Activated naive CD4-positive, alpha-beta T cell treated with anti-CD3 and anti-CD28 coated beads for 36 hours (primary cell): ENCODE measurements at regions of chr19 and their contacts with region 1.

Region 1: DNA sequence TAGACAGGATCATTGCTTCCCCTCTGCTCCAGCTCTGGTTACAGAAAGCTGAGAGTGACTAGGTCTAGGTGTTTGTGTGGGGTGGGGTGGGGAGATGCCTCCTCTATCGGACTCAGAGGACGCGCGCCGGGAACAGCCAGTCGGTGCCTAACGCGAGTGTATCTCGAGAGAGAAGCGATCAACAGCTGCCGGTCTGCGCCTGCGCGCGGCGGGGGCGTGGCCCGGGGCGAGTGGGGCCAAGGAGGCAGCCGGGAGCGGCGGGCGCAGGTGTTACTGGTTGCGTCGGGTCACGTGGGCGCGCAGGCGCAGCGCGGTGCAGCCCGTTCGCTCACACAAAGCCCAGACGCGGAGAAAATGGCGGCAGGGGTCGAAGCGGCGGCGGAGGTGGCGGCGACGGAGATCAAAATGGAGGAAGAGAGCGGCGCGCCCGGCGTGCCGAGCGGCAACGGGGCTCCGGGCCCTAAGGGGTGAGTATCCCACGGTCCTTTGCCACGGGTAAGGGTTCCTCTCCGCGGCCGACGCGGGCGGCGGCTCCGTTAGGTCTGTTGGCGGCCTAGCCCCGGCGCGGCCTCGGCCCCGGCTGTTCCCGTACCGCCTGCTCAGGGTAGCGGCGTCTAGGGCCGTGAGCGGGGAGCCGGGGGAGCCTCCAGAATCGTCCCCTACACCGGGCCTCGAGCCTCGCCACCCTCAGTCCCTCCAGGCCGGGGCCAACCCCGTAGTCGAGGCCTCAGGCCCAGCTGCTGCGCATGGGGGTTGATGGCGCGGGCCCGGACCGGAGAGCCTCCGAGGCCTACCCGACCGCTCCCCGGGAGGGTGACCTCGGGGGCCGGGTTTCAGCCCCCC is at the start of gene HNRNPM:
- DNase-seq: peak; percentile 100
- H3K4me3 Mint-ChIP-seq: peak within 1 kb of the TSS; percentile 95
- H3K27ac Mint-ChIP-seq: peak within 1 kb of the TSS; percentile 94
- H3K4me1 Mint-ChIP-seq: peaks cover 38% of the 10 kb centered on the region
- H3K27me3 Mint-ChIP-seq: no peaks in the 10 kb centered on the region
- total RNA-seq, gene HNRNPM: 151 to 169 TPM

Region 2: GRCh38 chr19:8005534-8006256 is 439.2 kb before region 1 on chr19 and contains the start of gene ELAVL1:
- CTCF ChIA-PET with region 1: no interaction called
- intact Hi-C with region 1: loop called (anchors 10 kb)
- DNase-seq: peak; percentile 89
- H3K4me3 Mint-ChIP-seq: peak within 1 kb of the TSS; percentile 94
- H3K27ac Mint-ChIP-seq: peak within 1 kb of the TSS; percentile 78
- H3K4me1 Mint-ChIP-seq: peaks cover 35% of the 10 kb centered on the region
- H3K27me3 Mint-ChIP-seq: no peaks in the 10 kb centered on the region
- total RNA-seq, gene ELAVL1: 135 to 140 TPM

Region 3: DNA sequence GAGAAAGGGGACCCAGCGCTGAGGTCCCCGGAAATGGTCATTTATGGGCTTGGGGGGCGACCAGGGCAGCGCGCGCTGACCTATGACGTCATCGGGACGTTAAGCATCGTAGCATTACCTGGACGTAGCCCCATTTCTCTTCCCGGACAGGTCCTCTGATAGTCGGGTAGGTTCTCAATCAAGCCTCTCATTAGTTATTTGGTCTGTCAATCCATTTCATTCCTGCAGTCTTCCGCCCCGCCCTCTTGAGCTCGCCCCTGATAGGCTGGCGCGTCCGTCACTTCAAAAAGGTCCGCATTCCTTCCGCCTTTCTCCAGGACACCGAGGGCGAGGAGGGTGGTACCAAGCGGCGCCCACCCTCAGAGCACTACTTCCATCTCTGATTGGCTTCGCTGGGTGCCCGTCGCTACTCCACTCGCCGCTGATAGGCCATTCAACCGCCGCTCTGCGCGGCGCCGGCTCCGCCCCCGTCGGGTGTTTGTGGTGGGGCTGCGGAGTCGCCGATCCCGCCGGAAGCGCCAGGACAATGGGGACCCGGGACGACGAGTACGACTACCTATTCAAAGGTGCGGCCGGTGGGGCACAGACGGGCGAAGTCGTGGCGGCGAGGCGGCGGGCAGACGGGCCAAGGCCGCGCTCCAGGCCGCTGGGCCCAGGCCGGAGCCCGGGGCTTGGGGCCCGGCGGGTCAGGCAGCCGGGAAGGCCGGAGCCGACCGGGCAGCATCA is 54.8 kb before region 1 on chr19 and contains the start of gene RAB11B:
- CTCF ChIA-PET with region 1: no interaction called
- intact Hi-C with region 1: loop called (anchors 1 kb)
- DNase-seq: peak; percentile 100
- H3K4me3 Mint-ChIP-seq: peak within 1 kb of the TSS; percentile 93
- H3K27ac Mint-ChIP-seq: peak within 1 kb of the TSS; percentile 96
- H3K4me1 Mint-ChIP-seq: peaks cover 25% of the 10 kb centered on the region
- H3K27me3 Mint-ChIP-seq: no peaks in the 10 kb centered on the region
- total RNA-seq, gene RAB11B: 61.9 to 69.6 TPM

Region 4: GRCh38 chr19:8412783-8413628 is 31.9 kb before region 1 on chr19 and contains the start of gene MARCHF2:
- CTCF ChIA-PET with region 1: interaction called, 4 read pairs
- intact Hi-C with region 1: loop called (anchors 1 kb)
- DNase-seq: peak; percentile 95
- H3K4me3 Mint-ChIP-seq: peak within 1 kb of the TSS; percentile 56
- H3K27ac Mint-ChIP-seq: no peak within 1 kb of the TSS
- H3K4me1 Mint-ChIP-seq: peaks cover 5% of the 10 kb centered on the region
- H3K27me3 Mint-ChIP-seq: no peaks in the 10 kb centered on the region
- total RNA-seq, gene MARCHF2: 9.2 to 10.3 TPM

Region 5: DNA sequence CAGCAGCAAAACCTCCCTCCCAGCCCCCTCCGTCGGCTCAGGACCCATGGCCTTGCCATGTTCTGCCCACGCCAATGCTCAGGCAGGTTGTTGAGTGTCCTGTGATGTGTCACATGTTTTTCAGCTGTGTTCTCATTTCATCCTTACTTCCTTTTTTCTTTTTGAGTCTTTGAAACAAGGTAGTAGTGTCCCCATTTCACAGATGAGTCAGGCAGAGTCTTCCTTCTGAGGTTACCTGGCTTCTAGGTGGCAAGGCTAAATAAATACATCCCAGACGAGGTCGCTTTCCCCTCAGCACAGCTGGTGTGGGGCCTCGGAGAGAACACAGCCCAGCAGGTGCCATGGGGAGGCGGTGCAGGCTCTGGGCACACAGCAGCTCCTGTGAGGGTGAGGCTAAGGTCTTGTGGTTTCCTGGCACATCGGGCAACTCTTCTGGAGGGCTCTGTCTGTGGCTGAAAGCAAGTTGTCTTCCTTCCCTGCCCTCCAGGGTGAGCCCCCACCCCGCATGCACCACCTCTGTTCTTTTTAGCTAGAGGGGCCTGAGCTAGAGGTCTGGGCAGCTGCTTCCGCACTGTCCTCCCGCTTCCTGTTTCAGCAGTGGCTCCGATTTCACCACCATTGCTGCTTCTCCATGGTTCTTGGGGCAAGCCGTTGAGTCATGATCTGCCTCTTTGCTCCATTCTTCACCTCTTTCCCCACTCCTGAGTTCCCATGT is 42.4 kb after region 1 on chr19:
- CTCF ChIA-PET with region 1: interaction called, 3 read pairs
- intact Hi-C with region 1: loop called (anchors 5 kb)
- DNase-seq: peak; percentile 68
- H3K4me3 Mint-ChIP-seq: no peak overlapping the region
- H3K27ac Mint-ChIP-seq: peak overlapping the region; percentile 89
- H3K4me1 Mint-ChIP-seq: peaks cover 32% of the 10 kb centered on the region
- H3K27me3 Mint-ChIP-seq: no peaks in the 10 kb centered on the region

Region 6: DNA sequence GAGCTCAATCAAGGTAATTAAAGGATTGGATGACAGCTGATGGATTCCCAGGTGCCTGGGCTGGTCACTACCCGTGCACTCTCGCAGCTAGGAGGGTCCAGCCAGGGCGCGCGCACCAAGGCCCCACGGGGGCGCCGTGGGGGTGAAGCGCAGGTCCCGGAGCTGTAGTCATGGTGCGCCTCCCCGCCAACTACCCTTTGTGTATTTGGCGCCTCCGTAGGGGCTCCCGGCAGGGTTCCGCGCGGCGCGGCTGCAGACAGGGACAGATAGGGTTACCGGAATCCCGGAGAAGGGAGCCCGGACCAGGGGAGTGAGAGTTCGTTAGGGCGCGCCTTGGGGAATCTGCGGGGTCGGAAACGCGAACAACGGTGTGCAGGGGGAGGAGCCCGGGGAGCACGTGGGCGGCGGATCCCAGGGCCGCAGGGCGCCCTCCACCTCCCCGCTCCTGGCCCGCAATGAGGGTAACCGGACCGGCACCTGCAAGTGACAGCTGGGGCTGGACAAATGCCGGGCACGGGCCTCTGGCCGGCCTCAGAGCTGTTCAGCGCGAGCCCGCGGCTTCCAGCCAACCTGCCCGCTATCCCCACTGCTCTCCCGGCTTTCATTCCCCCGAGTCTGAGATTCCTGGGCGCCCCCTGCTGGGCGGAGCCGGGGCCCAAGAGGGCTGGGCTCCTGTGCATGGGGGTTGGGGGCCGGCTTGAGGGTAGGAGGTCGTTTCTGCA is 61.0 kb after region 1 on chr19:
- CTCF ChIA-PET with region 1: interaction called, 4 read pairs
- intact Hi-C with region 1: loop called (anchors 1 kb)
- DNase-seq: peak; percentile 81
- H3K4me3 Mint-ChIP-seq: peak overlapping the region; percentile 84
- H3K27ac Mint-ChIP-seq: peak overlapping the region; percentile 63
- H3K4me1 Mint-ChIP-seq: peaks cover 8% of the 10 kb centered on the region
- H3K27me3 Mint-ChIP-seq: no peaks in the 10 kb centered on the region

Region 7: GRCh38 chr19:8513687-8514504 is 69.0 kb after region 1 on chr19 and contains the start of gene ZNF414:
- CTCF ChIA-PET with region 1: no interaction called
- intact Hi-C with region 1: loop called (anchors 2 kb)
- DNase-seq: peak; percentile 98
- H3K4me3 Mint-ChIP-seq: peak within 1 kb of the TSS; percentile 97
- H3K27ac Mint-ChIP-seq: peak within 1 kb of the TSS; percentile 97
- H3K4me1 Mint-ChIP-seq: peaks cover 47% of the 10 kb centered on the region
- H3K27me3 Mint-ChIP-seq: no peaks in the 10 kb centered on the region
- total RNA-seq, gene ZNF414: 19.8 to 24.1 TPM

Region 8: DNA sequence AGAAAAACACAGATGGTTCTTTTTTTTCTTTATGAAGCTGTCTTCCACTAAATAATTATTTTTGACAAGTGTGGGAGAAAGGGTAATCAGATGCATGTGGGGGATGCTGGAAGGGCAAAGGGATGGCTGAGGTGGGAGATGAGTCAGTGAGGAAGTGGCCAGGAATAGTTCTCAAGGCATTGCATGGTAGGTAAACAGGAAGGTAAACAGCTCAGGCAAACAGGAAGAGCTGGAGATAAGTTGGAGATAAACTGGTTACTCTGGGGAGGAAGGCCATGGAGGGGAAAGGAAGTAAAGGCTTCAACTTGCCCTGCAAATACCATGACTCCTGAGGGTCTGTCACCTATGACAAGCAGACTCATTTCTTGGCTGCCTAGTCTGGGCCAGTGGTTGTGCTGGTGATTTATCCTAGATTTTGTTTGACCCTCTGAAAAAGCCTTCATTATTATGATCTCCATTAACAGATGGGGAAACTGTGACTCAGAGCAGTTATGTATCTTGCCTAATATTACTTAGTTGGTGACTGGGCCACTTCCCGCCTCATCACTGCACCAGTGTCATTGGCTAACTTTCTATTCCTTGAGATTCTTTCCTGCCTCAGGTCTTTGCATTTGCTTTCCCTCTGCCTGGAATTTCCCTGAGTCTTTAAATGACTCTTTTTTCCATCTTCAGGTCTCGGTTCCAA is 236.6 kb after region 1 on chr19:
- CTCF ChIA-PET with region 1: no interaction called
- intact Hi-C with region 1: no loop called
- DNase-seq: no peak
- H3K4me3 Mint-ChIP-seq: no peak overlapping the region
- H3K27ac Mint-ChIP-seq: no peak overlapping the region
- H3K4me1 Mint-ChIP-seq: no peaks in the 10 kb centered on the region
- H3K27me3 Mint-ChIP-seq: no peaks in the 10 kb centered on the region